CD8-positive, alpha-beta T cell (primary cell): ENCODE measurements at regions of chr5 and their contacts with region 1.

Region 1: DNA sequence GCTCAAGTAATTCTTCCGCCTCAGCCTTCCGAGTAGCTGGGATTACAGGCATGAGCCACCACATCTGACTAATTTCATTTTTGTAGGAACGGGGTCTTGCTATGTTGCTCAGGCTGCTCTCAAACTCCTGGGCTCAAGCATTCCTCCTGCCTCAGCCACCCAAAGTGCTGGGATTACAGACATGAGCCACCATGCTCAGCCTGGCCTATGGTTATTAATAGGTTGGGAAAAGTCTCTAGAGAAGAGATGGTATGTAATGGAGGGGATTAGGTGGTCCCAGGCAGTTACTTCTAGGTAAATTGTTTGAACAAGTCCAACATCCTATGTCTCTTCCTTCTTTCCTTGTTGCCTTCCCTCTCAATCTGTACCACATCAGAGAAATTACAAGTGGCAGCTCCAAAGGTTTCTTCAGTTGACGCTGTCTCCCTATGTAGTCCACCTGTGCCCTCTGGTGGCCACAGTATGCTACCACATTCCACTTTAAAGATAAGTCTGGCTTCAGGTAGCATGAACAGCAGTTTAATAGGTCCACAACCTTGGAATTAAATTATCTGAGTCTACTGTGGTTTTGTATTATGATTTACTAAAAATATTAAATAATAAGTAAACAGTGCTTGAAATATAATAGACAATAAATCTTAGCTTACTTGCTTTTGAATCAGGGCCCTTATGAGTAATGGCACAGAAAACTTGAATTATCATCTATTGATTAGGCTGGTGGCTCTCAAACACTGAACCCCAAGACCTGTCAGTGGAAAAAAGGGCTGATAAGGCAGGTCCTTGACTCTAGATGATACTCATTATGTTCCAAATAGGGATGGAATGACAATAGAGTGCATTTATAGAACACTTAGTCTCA is 9.7 kb downstream of the TIGD6 start:
- DNase-seq: peak; percentile 35 to 81 (median 67)
- ATAC-seq: peak; percentile 97
- H3K4me3 ChIP-seq: no peak overlapping the region
- H3K4me3 Mint-ChIP-seq: no peak overlapping the region
- H3K27ac ChIP-seq: no peak overlapping the region
- H3K27ac Mint-ChIP-seq: no peak overlapping the region
- H3K4me1 ChIP-seq: no peaks in the 10 kb centered on the region
- H3K4me1 Mint-ChIP-seq: peaks cover 2% of the 10 kb centered on the region
- H3K27me3 ChIP-seq: no peaks in the 10 kb centered on the region
- H3K27me3 Mint-ChIP-seq: no peaks in the 10 kb centered on the region
- CTCF ChIP-seq: peak; percentile 94

Region 2: GRCh38 chr5:149828161-149828884 is 162.4 kb before region 1 on chr5:
- CTCF ChIA-PET with region 1: interaction called, 126 read pairs
- POLR2A ChIA-PET with region 1: no interaction called
- intact Hi-C with region 1: no loop called
- DNase-seq: peak; percentile 65 to 90 (median 80)
- ATAC-seq: peak; percentile 79
- H3K4me3 ChIP-seq: no peak overlapping the region
- H3K4me3 Mint-ChIP-seq: no peak overlapping the region
- H3K27ac ChIP-seq: no peak overlapping the region
- H3K27ac Mint-ChIP-seq: no peak overlapping the region
- H3K4me1 ChIP-seq: no peaks in the 10 kb centered on the region
- H3K4me1 Mint-ChIP-seq: peaks cover 2% of the 10 kb centered on the region
- H3K27me3 ChIP-seq: no peaks in the 10 kb centered on the region
- H3K27me3 Mint-ChIP-seq: no peaks in the 10 kb centered on the region
- CTCF ChIP-seq: peak; percentile 84

Region 3: DNA sequence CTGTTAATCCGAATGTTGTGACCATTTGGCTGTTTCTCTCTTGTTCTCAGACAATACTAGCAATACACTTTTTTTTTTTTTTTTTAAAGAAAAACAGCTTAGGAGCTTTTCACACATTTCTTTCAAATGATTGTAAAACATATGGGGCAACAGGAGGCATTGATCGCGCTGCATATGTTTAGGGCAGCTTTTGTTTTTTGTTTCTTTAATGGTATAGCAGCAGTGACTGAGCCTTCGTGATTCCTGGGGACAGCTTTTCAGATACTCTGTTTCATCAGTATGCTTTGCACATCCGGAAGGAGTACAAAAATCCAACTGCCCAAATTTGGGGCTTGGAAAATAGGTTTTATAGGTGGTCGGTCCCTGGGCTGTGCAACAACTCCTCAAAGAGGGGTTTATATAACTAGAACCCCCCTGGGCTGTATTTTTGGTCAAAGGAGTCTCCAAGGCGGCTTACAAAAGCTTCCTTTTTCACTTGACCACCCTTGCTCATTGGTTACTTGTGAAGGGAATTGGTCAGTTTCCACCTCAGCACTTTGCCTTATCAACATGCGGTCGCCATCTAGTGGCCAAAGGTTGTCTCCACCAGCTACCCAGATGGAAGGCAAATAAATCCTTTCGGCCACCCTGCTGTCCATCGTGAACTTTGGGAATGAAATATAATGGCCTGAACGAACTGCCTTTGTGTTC is 138.0 kb before region 1 on chr5:
- CTCF ChIA-PET with region 1: interaction called, 36 read pairs
- POLR2A ChIA-PET with region 1: no interaction called
- intact Hi-C with region 1: loop called in 1 of 2 experiments (anchors 1 kb)
- DNase-seq: peak in 7 of 9 experiments; percentile 13 to 57 (median 46)
- ATAC-seq: no peak
- H3K4me3 ChIP-seq: no peak overlapping the region
- H3K4me3 Mint-ChIP-seq: no peak overlapping the region
- H3K27ac ChIP-seq: no peak overlapping the region
- H3K27ac Mint-ChIP-seq: no peak overlapping the region
- H3K4me1 ChIP-seq: no peaks in the 10 kb centered on the region
- H3K4me1 Mint-ChIP-seq: no peaks in the 10 kb centered on the region
- H3K27me3 ChIP-seq: no peaks in the 10 kb centered on the region
- H3K27me3 Mint-ChIP-seq: no peaks in the 10 kb centered on the region
- CTCF ChIP-seq: peak; percentile 61

Region 4: DNA sequence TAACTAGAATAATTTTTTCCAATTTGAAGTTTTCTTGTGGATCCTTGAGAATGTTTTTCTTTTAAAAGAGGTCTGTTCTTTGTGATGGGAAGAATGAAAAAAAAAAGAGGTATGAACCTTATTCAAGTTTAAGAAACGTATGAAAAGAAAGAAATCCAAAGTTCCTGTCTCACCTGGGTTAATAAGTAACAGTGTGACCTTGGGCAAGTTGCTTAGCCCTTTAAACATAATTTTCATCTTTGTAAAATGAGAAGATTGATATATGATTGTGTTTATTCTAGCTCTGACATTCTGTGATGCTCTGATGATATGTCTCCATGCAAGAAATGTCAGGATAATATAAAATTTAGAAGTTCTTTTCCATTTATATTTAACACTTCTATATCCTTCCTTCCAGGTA is 10.9 kb before region 1 on chr5:
- CTCF ChIA-PET with region 1: interaction called, 19 read pairs
- POLR2A ChIA-PET with region 1: no interaction called
- intact Hi-C with region 1: no loop called
- DNase-seq: no peak
- ATAC-seq: no peak
- H3K4me3 ChIP-seq: no peak overlapping the region
- H3K4me3 Mint-ChIP-seq: no peak overlapping the region
- H3K27ac ChIP-seq: no peak overlapping the region
- H3K27ac Mint-ChIP-seq: no peak overlapping the region
- H3K4me1 ChIP-seq: no peaks in the 10 kb centered on the region
- H3K4me1 Mint-ChIP-seq: no peaks in the 10 kb centered on the region
- H3K27me3 ChIP-seq: no peaks in the 10 kb centered on the region
- H3K27me3 Mint-ChIP-seq: no peaks in the 10 kb centered on the region
- CTCF ChIP-seq: no peak

Region 5: GRCh38 chr5:150217873-150218692 is 227.3 kb after region 1 on chr5:
- CTCF ChIA-PET with region 1: interaction called, 5 read pairs
- POLR2A ChIA-PET with region 1: no interaction called
- intact Hi-C with region 1: loop called in 1 of 2 experiments (anchors 5 kb)
- DNase-seq: peak; percentile 68 to 91 (median 83)
- ATAC-seq: peak; percentile 97
- H3K4me3 ChIP-seq: no peak overlapping the region
- H3K4me3 Mint-ChIP-seq: no peak overlapping the region
- H3K27ac ChIP-seq: no peak overlapping the region
- H3K27ac Mint-ChIP-seq: no peak overlapping the region
- H3K4me1 ChIP-seq: no peaks in the 10 kb centered on the region
- H3K4me1 Mint-ChIP-seq: peaks cover 2% of the 10 kb centered on the region
- H3K27me3 ChIP-seq: no peaks in the 10 kb centered on the region
- H3K27me3 Mint-ChIP-seq: peaks cover 3% of the 10 kb centered on the region
- CTCF ChIP-seq: peak; percentile 82